ENCODE measurements at regions of chr5 and their contacts with region 1.

Region 1: GRCh38 chr5:74640450-74640953 is at the start of gene ENC1:
- DNase-seq: peak; percentile 96
- ATAC-seq: peak; percentile 94
- total RNA-seq, gene ENC1: 3.7 TPM

Region 2: DNA sequence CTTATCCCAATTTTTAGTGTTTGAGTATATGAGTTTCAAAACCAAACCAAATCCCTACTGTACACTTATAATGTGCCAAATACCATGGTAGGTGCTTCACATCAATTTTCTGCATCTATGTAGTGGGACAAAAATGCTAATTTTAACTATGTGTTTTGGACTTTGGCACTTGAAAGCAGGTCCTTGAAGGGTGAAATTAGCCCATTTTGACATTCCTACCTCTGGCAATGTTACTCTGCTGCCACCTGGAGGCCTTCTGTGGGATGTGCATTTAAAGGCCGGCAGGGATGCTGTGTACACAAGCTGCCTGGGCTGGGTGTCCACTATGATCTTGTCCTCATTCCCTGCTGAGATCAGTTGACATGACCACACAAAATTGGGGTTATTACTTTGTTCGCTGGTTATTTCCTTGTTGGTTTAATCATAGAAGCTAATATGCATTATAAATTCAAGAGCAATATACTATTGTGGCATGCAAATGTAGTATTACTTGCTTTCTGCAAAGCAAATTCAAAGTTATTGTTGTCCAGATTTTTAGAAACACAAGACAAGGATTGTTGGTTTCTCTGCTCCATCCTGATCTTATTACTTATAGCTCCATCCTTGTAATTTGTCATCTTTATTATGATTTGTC is 847.7 kb before region 1 on chr5:
- intact Hi-C with region 1: loop called (anchors 10 kb)
- DNase-seq: no peak
- ATAC-seq: no peak

Region 3: GRCh38 chr5:74167206-74167929 is 473.1 kb before region 1 on chr5:
- intact Hi-C with region 1: loop called (anchors 10 kb)
- DNase-seq: no peak
- ATAC-seq: no peak

Region 4: DNA sequence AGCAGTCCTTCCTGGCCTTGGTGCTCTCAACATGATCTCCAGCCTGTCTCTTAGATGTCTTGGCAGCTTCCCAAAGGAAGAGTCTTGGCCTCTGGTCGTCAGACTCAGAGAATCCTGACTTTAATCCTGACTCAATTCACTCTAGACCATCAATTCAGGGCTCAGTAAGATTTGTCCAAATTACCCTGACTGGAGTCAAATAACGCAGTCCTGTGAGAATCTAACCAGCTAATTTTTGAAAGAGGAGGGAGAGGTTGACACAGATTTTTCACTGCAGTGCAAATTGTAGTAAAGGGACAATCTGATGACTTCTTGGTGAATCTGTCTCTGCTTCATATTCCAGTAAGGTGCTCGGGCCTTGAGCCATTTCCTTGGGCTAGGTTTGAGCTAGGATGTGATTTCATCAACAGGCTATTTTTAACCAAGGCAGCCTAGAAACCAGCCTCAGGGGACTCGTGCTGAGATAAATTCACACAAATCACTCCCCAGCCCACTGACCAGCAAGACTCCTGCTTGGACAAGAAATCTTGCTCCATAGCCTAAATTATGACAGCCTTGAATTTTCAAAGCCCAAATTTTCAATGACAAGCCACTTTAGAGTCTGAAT is 257.4 kb before region 1 on chr5:
- intact Hi-C with region 1: loop called (anchors 5 kb)
- DNase-seq: no peak
- ATAC-seq: peak; percentile 78

Region 5: GRCh38 chr5:74500110-74500917 is 140.2 kb before region 1 on chr5:
- intact Hi-C with region 1: loop called (anchors 5 kb)
- DNase-seq: no peak
- ATAC-seq: no peak

Measured in Right ventricle myocardium inferior (tissue), 1 donor.